Breast epithelium (tissue), 4 donors: ENCODE measurements at regions of chr10 and their contacts with region 1.

Region 1: DNA sequence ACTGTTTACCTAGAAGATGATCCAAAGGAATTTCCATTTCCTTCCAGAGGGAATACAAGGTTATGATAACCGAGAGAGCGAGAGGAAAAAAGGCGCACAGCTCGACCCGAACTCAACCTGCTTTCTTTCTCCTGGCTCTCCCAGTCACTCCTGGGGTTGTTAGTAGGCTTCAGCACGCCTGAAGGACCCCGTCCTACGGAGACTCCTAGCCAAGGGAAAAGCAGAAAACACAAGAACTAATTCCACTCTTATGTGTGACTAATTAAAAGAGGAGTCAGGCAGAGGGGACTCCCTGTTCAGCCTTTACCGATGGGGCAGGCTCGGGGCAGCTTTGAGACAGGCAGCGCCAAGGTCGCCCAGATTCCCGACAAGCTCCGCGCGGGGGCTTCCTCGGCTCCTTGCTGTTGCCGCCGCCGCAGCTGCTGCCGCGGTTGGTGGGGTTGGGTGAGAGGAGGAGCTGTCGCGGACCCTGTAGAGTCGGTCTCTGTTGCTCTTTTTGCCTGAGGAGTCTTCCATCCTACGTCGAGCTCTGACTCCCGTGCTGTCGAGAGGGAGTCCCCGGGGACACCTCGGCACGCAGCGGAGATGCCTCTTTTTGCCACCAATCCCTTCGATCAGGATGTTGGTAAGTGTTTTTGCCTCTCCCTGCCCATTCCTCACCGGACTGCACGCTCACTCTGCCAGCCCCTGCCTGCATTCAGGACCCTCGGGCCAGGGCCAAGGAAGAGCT is at the start of gene STAM:
- DNase-seq: peak; percentile 81
- H3K4me3 ChIP-seq: peak within 1 kb of the TSS; percentile 72 to 82 (median 73)
- H3K27ac ChIP-seq: peak within 1 kb of the TSS; percentile 98
- H3K4me1 ChIP-seq: peaks cover 0 to 12% of the 10 kb centered on the region in 2 donors
- H3K27me3 ChIP-seq: no peaks in the 10 kb centered on the region
- CTCF ChIP-seq: no peak
- POLR2A ChIP-seq: no peak
- total RNA-seq, gene STAM: 19.0 to 25.2 (median 22.7) TPM

Region 2: DNA sequence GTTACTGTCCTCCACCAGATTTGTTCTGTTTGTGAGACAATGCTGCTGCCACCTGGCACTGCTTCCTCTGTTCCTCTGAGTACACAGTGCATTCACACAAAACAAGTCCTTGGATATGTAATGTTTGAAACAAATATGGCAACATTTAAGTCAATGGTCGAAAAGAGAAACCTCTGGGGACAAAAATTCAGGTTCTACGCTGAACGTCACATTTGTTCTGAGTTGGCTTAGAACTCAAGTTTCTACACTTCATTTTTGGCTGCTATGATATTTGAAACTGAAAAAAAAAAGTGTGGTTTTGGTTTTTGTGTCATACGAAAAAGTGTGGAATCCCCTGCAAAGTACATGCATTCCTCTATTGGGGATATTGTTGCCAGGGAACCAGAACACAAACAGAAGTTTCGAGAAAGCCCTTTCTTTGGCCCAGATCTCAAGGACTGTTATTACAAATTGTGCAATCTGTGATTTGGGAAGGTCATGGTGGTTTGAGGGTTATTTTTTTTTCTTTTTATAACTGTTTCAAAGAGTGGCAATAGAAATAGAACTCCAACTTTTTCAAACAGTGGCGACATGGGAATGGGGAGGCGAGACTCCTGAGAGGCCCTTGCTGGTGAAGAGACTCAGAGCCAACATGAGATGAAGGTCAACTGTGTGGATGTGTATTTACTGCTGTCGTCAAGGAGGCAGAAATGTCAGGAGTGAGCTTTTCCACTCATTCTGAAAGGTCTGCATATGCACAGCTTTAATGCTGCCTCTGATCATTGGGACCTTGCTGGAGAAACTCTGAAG is 641.8 kb before region 1 on chr10:
- intact Hi-C with region 1: loop called (anchors 5 kb)
- DNase-seq: no peak
- H3K4me3 ChIP-seq: no peak overlapping the region
- H3K27ac ChIP-seq: peak overlapping the region; percentile 71 to 86
- H3K4me1 ChIP-seq: no peaks in the 10 kb centered on the region
- H3K27me3 ChIP-seq: no peaks in the 10 kb centered on the region
- CTCF ChIP-seq: no peak
- POLR2A ChIP-seq: no peak

Region 3: GRCh38 chr10:17805921-17806577 is 162.1 kb after region 1 on chr10:
- intact Hi-C with region 1: no loop called
- DNase-seq: no peak
- H3K4me3 ChIP-seq: no peak overlapping the region
- H3K27ac ChIP-seq: no peak overlapping the region
- H3K4me1 ChIP-seq: no peaks in the 10 kb centered on the region
- H3K27me3 ChIP-seq: no peaks in the 10 kb centered on the region
- CTCF ChIP-seq: no peak
- POLR2A ChIP-seq: no peak